Activated naive CD4-positive, alpha-beta T cell treated with anti-CD3 and anti-CD28 coated beads for 36 hours (primary cell): ENCODE measurements at regions of chr10 and their contacts with region 1.

Region 1: DNA sequence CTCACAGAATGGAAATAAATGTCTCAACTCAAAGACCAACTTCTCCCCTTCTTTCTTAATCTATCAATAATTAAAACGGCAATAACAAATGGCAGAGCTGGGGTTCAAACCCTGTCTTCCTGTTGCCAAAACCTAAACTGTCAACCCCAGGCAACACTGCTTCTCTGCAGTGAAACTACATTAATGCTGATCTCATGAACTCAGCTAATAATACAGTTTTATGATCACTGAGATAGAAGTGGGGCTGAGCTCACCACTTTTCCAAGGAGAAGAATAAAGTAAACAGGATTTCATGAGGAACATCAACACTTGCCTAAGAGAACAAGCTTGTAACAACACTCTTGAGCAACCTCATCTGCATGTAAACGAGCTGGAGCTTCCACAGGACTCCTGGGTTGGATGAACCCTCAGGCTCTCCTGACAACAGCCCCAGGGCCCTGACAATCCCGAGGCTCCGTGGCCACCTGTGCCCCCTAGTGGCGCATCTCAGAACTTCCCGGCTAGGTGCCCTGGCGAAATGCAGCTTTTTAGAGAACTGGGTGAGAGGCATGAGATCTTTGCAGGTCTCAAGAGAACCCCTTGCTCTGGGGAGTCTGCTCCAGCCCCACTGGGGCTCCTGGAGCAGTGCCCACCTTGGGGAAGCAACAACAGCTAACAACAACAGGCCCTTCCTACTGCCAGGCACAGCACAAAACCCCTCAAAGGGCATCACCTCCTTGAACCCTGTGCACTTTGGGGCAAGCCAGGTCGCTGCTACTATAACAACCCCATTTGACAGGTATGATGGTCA is 169.3 kb downstream of the SH3PXD2A start:
- DNase-seq: peak; percentile 87
- H3K4me3 Mint-ChIP-seq: no peak overlapping the region
- H3K27ac Mint-ChIP-seq: no peak overlapping the region
- H3K4me1 Mint-ChIP-seq: no peaks in the 10 kb centered on the region
- H3K27me3 Mint-ChIP-seq: no peaks in the 10 kb centered on the region

Region 2: GRCh38 chr10:103592186-103593021 is 93.7 kb before region 1 on chr10:
- CTCF ChIA-PET with region 1: interaction called, 29 read pairs
- intact Hi-C with region 1: no loop called
- DNase-seq: peak; percentile 64
- H3K4me3 Mint-ChIP-seq: no peak overlapping the region
- H3K27ac Mint-ChIP-seq: no peak overlapping the region
- H3K4me1 Mint-ChIP-seq: no peaks in the 10 kb centered on the region
- H3K27me3 Mint-ChIP-seq: no peaks in the 10 kb centered on the region

Region 3: DNA sequence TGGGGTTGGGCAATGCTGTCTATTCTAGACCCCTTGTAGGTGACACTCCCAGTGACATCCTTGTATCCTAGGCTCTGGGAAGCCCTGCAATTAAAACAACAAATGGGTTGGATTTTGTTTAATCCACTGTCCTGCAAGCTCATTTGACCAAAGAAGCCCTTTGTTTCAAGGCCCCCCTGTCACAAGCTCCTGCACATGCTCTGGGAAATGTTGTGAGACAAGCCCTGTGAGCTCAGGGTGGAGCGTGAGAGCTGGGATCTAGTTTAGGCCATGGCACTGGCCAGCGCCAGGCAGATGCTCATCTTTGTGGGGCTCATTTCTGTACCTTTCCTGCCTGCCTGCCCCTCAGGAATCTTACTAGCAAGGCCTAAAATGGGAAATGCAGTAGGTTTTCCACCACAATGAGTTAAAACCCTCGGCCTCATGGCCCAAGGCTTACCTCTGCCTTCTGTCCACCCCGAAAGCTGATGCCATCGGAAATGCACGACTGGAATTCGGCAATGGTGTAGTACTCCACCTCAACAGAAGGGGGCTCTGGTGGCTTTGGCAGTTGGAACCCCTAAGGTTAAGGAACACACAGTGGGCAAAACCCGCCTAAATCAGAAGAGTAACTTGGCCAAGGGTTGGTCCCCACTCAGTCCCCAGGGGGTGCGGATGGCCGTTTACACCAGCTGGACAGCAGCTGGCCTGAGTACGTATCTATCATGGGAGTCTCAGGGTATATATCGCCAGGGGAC is 80.5 kb before region 1 on chr10:
- CTCF ChIA-PET with region 1: interaction called, 74 read pairs
- intact Hi-C with region 1: loop called (anchors 1 kb)
- DNase-seq: peak; percentile 60
- H3K4me3 Mint-ChIP-seq: no peak overlapping the region
- H3K27ac Mint-ChIP-seq: no peak overlapping the region
- H3K4me1 Mint-ChIP-seq: no peaks in the 10 kb centered on the region
- H3K27me3 Mint-ChIP-seq: no peaks in the 10 kb centered on the region

Region 4: GRCh38 chr10:103618575-103619423 is 67.3 kb before region 1 on chr10:
- CTCF ChIA-PET with region 1: interaction called, 12 read pairs
- intact Hi-C with region 1: no loop called
- DNase-seq: no peak
- H3K4me3 Mint-ChIP-seq: no peak overlapping the region
- H3K27ac Mint-ChIP-seq: no peak overlapping the region
- H3K4me1 Mint-ChIP-seq: no peaks in the 10 kb centered on the region
- H3K27me3 Mint-ChIP-seq: no peaks in the 10 kb centered on the region

Region 5: GRCh38 chr10:103666087-103666761 is 19.9 kb before region 1 on chr10:
- CTCF ChIA-PET with region 1: interaction called, 45 read pairs
- intact Hi-C with region 1: no loop called
- DNase-seq: peak; percentile 19
- H3K4me3 Mint-ChIP-seq: no peak overlapping the region
- H3K27ac Mint-ChIP-seq: no peak overlapping the region
- H3K4me1 Mint-ChIP-seq: peaks cover 14% of the 10 kb centered on the region
- H3K27me3 Mint-ChIP-seq: no peaks in the 10 kb centered on the region

Region 6: DNA sequence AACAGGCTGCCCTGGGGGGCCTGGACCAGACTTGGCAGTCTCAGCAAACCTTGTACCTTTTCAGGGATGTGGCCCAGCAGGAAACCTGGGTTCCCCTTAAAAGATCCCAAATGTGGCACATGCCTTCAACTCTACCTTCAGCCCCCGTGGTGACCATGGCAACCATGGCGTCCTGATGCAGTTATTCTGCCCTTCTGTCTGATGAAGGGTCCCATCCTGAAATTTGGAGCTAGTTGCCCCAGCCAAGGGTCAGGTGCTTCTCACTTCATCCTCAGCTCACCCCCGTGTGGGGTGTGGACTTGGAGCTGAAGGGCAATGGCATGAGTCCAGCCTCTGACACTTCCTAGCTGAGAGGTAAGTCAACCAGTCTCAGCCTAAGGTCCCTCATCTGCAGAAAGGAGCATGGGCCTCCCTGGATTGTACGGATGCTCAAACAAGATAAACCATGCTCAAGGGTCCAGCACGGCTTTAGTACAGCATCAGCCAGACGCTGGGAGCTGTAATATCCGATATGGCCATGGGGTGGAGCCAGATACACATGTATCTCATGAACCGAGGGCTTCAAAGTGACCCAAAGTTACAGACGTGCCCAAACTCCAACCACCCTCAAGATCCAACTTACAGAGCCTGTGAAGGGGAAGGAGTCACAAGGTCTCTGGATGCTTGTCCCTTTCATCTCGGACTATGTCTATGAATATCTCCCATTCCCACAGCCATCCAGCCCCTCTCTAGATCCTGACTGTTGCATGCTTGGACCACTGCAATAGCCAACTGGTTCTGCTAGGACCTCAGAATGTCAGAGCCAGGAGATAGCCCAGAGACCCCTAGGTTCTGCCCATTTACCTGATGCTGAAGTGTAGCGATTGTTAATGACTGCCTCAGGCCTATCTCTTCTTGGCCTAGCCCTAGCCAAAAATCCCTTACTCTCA is 26.8 kb after region 1 on chr10:
- CTCF ChIA-PET with region 1: interaction called, 19 read pairs
- intact Hi-C with region 1: no loop called
- DNase-seq: peak; percentile 92
- H3K4me3 Mint-ChIP-seq: no peak overlapping the region
- H3K27ac Mint-ChIP-seq: no peak overlapping the region
- H3K4me1 Mint-ChIP-seq: no peaks in the 10 kb centered on the region
- H3K27me3 Mint-ChIP-seq: no peaks in the 10 kb centered on the region

Region 7: GRCh38 chr10:103770139-103770538 is 84.1 kb after region 1 on chr10:
- CTCF ChIA-PET with region 1: no interaction called
- intact Hi-C with region 1: no loop called
- DNase-seq: no peak
- H3K4me3 Mint-ChIP-seq: no peak overlapping the region
- H3K27ac Mint-ChIP-seq: no peak overlapping the region
- H3K4me1 Mint-ChIP-seq: peaks cover 43% of the 10 kb centered on the region
- H3K27me3 Mint-ChIP-seq: no peaks in the 10 kb centered on the region